ENCODE measurements at regions of chr14 and their contacts with region 1.

Region 1: DNA sequence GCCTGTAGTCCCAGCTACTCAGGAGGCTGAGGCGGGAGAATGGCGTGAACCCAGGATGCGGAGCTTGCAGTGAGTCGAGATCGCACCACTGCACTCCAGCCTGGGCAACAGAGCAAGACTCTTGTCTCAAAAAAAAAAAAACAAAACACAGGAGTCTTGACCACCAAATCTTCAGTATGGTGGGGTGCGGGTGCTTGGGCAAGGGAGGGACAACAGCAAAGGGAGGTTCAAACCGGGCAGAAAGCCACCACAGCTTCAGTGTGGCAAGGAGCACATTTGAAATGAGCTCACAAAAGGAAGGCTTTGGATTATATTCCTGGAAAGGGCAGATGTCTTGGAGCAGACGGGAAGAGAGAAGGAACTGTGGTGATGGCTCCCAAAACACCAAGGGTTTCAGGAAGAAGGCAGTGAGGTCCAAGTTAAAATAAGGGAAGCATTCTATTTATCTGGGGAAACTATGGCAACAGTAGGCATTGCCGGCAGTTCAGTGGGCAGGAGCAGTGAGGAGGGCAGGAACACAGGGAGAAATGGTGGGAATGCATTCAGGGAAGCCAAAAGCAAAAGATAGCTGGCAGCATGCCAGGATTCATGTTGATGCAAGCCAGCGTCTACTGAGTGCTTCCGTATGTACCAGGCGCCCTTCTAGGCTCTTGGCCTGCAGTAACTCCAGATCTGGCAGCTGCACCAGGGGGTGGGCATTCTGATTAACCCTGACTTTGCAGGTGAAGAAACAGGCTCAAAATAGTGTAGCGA is 51.0 kb upstream of the SRSF5 start:
- DNase-seq: peak; percentile 53 to 59
- ATAC-seq: no peak

Region 2: GRCh38 chr14:69376439-69376838 is 339.5 kb before region 1 on chr14:
- intact Hi-C with region 1: no loop called
- DNase-seq: no peak
- ATAC-seq: no peak

Region 3: GRCh38 chr14:69574263-69574953 is 141.5 kb before region 1 on chr14 and contains the start of gene CCDC177:
- intact Hi-C with region 1: no loop called
- DNase-seq: peak in 1 of 2 donors; percentile 76
- ATAC-seq: peak; percentile 70
- total RNA-seq, gene CCDC177: not detected

Region 4: DNA sequence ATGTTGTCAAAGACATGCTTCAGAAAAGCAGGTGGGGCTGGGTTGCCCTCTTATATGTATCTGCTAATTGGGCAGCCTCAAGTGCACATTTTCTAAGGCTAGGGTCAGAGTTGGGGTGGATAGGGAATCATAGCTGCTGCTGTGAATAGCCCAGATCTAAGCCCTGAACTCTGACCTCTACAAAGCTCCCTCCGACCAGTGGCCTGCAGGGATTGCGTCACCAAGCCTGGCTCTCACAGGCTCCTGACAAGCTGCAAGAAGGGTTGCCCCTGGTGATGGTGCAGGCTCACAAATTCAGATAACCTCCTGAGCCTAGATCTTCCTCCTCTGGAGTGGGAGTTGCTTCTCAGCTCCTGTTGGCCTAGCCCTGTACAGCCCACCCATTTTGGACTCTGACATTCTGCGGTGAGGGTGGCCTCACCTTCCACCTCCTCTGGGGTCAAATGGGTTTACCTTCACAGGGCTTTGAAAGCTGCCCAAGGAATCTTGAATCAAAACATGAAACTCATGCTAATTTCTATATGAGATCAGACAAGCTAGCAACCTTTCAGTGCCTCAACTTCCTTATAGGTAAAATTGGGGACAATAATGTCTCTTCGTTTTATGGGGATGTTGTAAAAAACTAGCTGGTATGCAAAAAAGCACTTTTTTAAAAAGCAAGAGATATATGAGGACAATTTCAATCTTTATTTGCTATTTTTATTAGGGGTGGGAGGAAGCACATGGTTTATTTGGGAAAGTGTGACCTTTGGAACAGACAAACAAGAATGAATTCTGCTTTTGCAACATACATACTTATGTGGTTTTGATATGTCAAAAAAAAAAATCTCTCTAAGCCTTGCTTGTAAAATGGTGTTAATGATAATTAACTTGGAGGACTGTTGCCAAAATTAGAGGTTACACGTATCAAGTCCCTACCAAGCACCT is 109.4 kb before region 1 on chr14:
- intact Hi-C with region 1: loop called (anchors 5 to 10 kb)
- DNase-seq: peak; percentile 47 to 67
- ATAC-seq: peak; percentile 52

Measured in left colon (tissue), 2 donors.